ENCODE measurements at regions of chr13 and their contacts with region 1.

Region 1: GRCh38 chr13:23848646-23849141 is 40.5 kb downstream of the MIPEP start:
- DNase-seq: no peak
- CTCF ChIP-seq: no peak

Region 2: GRCh38 chr13:23833733-23834626 is 14.7 kb before region 1 on chr13:
- CTCF ChIA-PET with region 1: interaction called, 10 read pairs
- POLR2A ChIA-PET with region 1: no interaction called
- DNase-seq: no peak
- CTCF ChIP-seq: no peak

Measured in GM10248 (cell line).